ENCODE measurements at regions of chr19 and their contacts with region 1.

Region 1: GRCh38 chr19:53147645-53148044 is 11.2 kb downstream of the ZNF347 start:
- DNase-seq: no peak
- H3K4me3 Mint-ChIP-seq: no peak overlapping the region
- H3K27ac Mint-ChIP-seq: no peak overlapping the region
- H3K4me1 Mint-ChIP-seq: no peaks in the 10 kb centered on the region
- H3K27me3 Mint-ChIP-seq: no peaks in the 10 kb centered on the region

Region 2: DNA sequence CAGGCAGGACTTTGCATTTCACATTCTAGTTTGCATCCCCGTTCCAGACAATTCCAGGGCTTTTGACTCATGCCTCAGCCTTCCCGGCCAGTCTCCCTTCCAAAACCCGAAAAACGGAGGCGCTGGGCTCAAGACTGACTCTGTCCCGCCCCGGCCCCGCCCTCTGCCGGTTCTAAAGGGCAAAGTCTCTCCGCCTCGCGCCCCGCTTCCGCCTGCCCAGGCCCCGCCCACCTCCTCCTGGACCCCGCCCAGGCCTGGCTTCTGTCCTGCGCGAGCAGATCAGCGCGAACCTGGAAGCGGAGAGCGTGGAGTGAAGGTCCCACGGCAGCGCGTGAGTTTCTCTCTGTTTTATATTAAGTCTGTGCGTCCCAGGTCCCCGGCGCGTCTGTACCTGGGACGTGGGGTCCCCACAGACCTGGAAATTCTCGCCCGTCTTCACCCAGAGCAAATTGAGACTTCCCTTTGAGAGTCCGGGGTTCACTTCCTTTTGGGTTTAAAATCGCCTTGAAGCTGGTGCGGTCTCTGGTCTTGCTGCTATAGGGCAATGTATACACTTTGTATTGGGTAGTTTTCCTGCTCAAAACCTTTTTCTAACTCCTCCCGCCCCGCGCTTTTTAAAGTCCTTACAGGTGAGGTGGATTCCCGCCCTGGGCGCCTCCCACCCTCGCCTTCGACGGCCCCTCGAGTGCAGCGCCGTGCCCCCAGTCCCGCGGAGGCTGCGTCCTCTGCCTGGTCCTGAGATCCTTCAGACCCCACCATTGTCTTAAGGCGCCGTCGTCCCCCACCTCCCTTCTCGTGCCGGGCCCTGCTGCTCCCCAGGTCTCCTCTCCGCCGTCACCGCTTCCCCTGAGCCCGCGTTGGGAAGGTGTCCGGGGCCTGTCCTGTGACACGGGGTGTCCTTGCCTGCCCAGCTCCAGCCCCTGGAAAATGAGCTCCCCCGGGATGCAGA is 546.3 kb before region 1 on chr19:
- CTCF ChIA-PET with region 1: no interaction called
- POLR2A ChIA-PET with region 1: no interaction called
- DNase-seq: peak; percentile 95
- H3K4me3 Mint-ChIP-seq: peak overlapping the region; percentile 92
- H3K27ac Mint-ChIP-seq: peak overlapping the region; percentile 85
- H3K4me1 Mint-ChIP-seq: peaks cover 24% of the 10 kb centered on the region
- H3K27me3 Mint-ChIP-seq: no peaks in the 10 kb centered on the region

Region 3: GRCh38 chr19:53047379-53047778 is 100.3 kb before region 1 on chr19:
- CTCF ChIA-PET with region 1: interaction called, 10 read pairs
- POLR2A ChIA-PET with region 1: no interaction called
- DNase-seq: no peak
- H3K4me3 Mint-ChIP-seq: no peak overlapping the region
- H3K27ac Mint-ChIP-seq: no peak overlapping the region
- H3K4me1 Mint-ChIP-seq: no peaks in the 10 kb centered on the region
- H3K27me3 Mint-ChIP-seq: no peaks in the 10 kb centered on the region